Astrocyte of the cerebellum (primary cell): ENCODE measurements at regions of chr20 and their contacts with region 1.

Region 1: GRCh38 chr20:8756410-8756809 is 312.5 kb upstream of the PLCB4 start:
- DNase-seq: peak; percentile 52
- H3K4me3 ChIP-seq: no peak overlapping the region
- CTCF ChIP-seq: no peak

Region 2: DNA sequence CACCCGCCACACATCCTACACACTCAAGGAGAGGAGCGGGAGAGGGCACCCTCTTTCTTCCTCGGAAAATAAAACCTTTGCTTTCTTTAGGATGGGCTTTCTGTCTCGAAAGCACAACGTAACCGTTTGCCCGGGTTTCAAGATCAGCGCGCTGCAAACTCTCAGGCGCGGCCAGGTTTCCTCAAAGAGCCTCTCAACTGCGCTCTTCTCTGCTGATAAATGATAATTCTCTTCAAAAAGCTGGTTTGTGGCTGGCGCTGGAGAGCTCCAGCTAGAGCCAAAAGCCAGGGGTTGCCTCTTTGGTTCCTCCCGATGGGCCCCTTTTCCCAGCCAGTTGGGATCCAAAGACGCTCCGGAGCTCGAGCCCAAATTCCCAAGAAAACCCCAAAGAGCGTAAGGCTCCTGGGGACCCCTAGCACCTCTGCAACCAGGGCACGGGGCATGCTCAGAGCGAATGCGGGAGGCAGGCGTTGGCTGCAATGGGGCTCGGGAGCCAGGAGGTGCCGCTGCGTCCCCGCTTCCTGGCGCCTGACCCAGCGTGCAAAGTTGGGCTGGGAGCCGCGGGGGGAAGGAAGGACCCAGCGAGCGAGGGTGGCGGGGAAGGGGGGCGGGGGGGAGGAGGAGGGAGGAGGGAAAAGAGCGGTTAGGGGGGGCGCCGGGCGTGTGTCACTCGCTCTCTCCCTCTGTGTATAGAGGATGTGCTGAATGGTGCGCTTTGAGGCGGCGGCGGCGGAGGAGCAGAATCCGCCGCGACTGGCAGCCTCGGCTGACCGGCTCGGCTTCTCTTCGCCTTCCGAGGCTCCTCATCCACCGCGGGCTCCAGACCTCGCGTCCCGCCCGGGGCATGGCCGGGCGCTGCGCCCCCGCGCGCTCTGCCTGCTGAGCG is 624.6 kb before region 1 on chr20 and contains the start of gene PLCB1:
- in situ Hi-C with region 1: no loop called
- DNase-seq: peak; percentile 60
- H3K4me3 ChIP-seq: peak within 1 kb of the TSS; percentile 49
- CTCF ChIP-seq: peak; percentile 87

Region 3: GRCh38 chr20:8722276-8722928 is 34.0 kb before region 1 on chr20:
- in situ Hi-C with region 1: no loop called
- DNase-seq: peak; percentile 59
- H3K4me3 ChIP-seq: no peak overlapping the region
- CTCF ChIP-seq: peak; percentile 74

Region 4: DNA sequence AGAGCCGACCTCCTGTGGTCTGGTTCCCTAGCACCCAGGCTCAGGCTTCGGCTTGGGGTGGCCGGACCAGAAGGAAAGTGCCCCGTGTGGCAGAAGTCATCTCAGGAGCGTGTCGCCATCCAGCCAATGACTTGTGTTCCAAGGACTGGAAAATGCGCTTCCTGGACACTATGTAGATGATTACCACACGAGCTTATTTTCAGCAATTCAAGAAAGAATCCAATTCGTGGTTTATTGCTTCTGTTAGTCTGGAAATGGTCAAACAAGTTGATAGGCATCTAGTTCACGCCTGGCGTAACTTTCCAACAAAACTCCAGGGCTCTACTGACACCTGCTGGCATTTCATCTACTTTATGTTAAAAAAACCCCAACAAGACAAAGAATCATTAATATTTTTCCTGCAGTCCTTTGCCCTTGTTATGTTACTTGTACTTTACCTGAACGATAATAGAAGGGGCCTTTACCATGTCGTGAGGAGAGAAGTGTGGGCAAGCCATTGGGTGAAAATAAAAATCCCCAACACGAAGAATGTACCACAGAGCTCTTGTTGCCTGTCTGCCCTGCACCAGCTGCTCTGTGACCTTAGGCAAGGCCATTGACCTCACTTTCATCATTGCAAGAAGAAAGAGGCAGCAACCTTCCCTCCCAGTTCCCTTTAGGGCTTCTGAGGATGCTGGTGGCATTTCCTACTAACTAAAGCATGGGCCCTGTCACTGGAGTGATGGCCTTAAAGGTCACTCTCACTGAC is 603.3 kb after region 1 on chr20:
- in situ Hi-C with region 1: loop called (anchors 25 kb)
- DNase-seq: peak; percentile 73
- H3K4me3 ChIP-seq: no peak overlapping the region
- CTCF ChIP-seq: peak; percentile 33